ENCODE measurements at regions of chr2 and their contacts with region 1.

Region 1: DNA sequence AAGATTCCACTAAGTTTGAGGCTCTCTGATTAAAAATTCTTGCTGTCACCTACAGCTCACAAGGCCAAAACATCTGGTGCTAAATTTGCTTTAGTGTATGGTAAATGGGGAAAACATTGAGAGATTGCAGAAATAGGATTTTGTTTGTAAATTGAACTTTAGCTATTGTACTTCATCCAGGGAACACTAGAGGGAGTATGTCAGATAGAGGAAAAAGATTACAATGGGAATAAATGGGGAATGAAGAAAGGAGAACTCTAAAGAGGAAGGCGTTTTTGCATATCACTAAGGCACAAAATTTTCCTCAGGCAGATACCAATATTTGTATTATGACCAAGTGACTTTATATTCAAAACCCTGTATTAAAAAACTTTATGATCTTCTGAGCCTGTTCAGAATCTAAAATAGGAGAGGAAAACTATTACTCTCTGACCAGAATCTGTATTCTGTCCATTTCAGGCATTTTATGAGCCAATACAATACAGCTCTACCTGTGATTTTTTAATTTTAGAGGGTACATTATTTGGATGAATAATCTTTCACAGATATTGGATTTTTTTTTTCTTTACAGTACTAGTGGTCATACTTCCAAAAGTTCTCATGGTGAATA is 52.3 kb upstream of the ITGB6 start:
- DNase-seq: peak; percentile 26
- CTCF ChIP-seq: peak; percentile 61

Region 2: GRCh38 chr2:160241251-160242137 is 10.9 kb before region 1 on chr2:
- CTCF ChIA-PET with region 1: interaction called, 25 read pairs
- POLR2A ChIA-PET with region 1: no interaction called
- DNase-seq: no peak
- CTCF ChIP-seq: no peak

Region 3: GRCh38 chr2:160269803-160270570 is 17.6 kb after region 1 on chr2:
- CTCF ChIA-PET with region 1: interaction called, 21 read pairs
- POLR2A ChIA-PET with region 1: no interaction called
- DNase-seq: peak; percentile 70
- CTCF ChIP-seq: peak; percentile 54

Region 4: DNA sequence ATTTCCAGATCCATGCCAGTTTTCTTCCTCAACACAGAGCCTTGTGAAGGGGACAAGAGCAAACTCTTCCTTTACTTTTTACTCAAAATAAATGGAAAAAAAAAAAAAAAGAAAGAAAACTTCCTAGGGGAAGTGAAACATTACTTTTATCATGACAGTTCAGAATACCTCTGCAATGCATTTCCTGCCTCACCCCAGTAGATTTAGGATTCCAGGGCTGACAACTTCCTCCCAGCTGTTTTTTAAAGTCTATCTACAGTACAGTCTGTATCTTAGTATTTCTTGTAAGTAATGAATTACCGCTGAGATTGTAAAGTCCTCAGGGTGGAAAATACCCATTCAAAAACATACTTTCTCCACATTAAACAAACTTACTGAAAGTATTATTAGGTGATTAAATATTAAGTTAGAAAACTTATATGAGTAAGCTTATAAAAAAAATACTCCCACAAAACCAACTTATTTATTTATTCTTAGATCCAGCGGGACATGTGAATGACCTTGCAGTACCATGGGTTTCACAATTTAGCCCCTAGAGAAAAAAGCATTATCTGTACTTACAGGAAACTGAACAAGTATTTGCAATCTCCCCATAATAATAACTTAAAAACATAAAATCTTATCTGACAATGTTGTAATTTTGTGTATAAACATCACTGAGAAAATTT is 123.6 kb after region 1 on chr2:
- CTCF ChIA-PET with region 1: no interaction called
- POLR2A ChIA-PET with region 1: no interaction called
- DNase-seq: no peak
- CTCF ChIP-seq: no peak

Measured in GM10248 (cell line).